SK-N-SH (cell line): ENCODE measurements at regions of chr12 and their contacts with region 1.

Region 1: GRCh38 chr12:83823431-83823963 is 1089.1 kb downstream of the SLC6A15 start:
- DNase-seq: peak; percentile 12
- H3K4me3 ChIP-seq: no peak overlapping the region; a peak in 1 of 4 replicates
- H3K27ac ChIP-seq: no peak overlapping the region
- H3K4me1 ChIP-seq: peaks cover 0 to 10% of the 10 kb centered on the region in 2 experiments; a peak in 1 of 4 replicates
- H3K27me3 ChIP-seq: no peaks in the 10 kb centered on the region
- CTCF ChIP-seq: peak; percentile 53
- EP300 ChIP-seq: no peak
- RAD21 ChIP-seq: peak; percentile 68

Region 2: GRCh38 chr12:83365317-83365716 is 458.2 kb before region 1 on chr12:
- CTCF ChIA-PET with region 1: no interaction called
- POLR2A ChIA-PET with region 1: no interaction called
- DNase-seq: no peak
- H3K4me3 ChIP-seq: no peak overlapping the region
- H3K27ac ChIP-seq: no peak overlapping the region
- H3K4me1 ChIP-seq: no peaks in the 10 kb centered on the region; a peak in 1 of 4 replicates
- H3K27me3 ChIP-seq: no peaks in the 10 kb centered on the region
- CTCF ChIP-seq: no peak
- EP300 ChIP-seq: no peak
- RAD21 ChIP-seq: no peak

Region 3: DNA sequence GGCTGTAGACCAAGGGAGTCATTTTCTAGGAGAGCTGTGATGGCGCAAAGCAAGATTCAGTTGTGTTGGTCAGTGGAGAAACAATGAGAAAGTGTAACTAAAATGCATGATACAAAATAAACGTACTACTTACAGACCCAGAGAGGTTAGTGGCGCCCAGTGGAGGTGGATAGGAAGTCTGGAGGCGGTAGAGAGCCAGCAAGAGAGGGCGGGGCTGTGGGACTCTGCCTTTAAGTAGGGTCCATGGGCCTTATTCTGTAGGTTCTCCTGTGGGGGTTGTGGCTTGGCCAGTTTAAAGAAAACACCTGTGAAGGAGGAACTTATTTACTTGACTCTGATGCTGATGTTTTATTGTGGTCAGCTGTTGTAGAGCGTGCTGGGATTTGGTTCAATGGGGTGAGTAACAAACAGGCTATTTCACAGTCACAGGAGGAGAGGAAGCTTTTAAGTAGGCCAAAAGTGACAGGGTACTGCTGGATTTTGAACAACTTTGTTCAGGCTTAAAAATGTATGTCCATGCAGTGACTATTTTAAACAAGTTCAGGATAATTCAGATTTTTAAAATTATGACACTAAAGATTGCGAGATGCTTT is 39.1 kb before region 1 on chr12:
- CTCF ChIA-PET with region 1: no interaction called
- POLR2A ChIA-PET with region 1: no interaction called
- DNase-seq: no peak
- H3K4me3 ChIP-seq: no peak overlapping the region
- H3K27ac ChIP-seq: no peak overlapping the region
- H3K4me1 ChIP-seq: no peaks in the 10 kb centered on the region
- H3K27me3 ChIP-seq: no peaks in the 10 kb centered on the region
- CTCF ChIP-seq: no peak
- EP300 ChIP-seq: no peak
- RAD21 ChIP-seq: no peak

Region 4: GRCh38 chr12:84397263-84397662 is 573.8 kb after region 1 on chr12:
- CTCF ChIA-PET with region 1: interaction called, 28 read pairs
- POLR2A ChIA-PET with region 1: no interaction called
- DNase-seq: peak; percentile 6
- H3K4me3 ChIP-seq: no peak overlapping the region
- H3K27ac ChIP-seq: peak overlapping the region; percentile 23 to 69; a peak in 2 of 4 replicates
- H3K4me1 ChIP-seq: peaks cover 0 to 4% of the 10 kb centered on the region in 2 experiments; a peak in 2 of 4 replicates
- H3K27me3 ChIP-seq: no peaks in the 10 kb centered on the region
- CTCF ChIP-seq: peak; percentile 75
- EP300 ChIP-seq: no peak
- RAD21 ChIP-seq: peak; percentile 45